ENCODE measurements at regions of chr3 and their contacts with region 1.

Region 1: GRCh38 chr3:32816439-32817256 is 1.1 kb upstream of the TRIM71 start:
- DNase-seq: peak; percentile 32
- H3K4me3 Mint-ChIP-seq: peak overlapping the region; percentile 62
- H3K27ac Mint-ChIP-seq: no peak overlapping the region
- H3K4me1 Mint-ChIP-seq: peaks cover 25% of the 10 kb centered on the region
- H3K27me3 Mint-ChIP-seq: peaks cover 46% of the 10 kb centered on the region

Region 2: DNA sequence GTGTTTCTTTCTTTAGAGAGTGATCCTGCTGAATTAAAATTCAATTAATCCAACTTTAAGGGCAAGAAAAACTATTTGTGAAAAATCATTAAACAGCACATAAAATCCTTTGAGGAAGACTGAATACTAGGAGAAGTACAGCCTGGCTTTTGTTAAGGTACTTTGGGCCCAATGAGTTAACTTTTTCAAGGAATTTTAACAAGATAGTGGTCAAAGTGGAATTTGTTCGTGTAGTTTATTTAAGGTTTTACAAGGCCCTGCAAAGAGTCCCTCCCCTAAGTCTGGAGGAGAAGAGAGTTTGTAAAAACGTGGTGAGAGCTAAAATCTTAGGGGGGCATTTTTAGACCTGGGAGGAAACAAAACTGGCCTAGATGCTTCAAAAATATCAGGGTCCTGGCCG is 24.8 kb before region 1 on chr3:
- CTCF ChIA-PET with region 1: no interaction called
- POLR2A ChIA-PET with region 1: no interaction called
- intact Hi-C with region 1: no loop called
- DNase-seq: no peak
- H3K4me3 Mint-ChIP-seq: no peak overlapping the region
- H3K27ac Mint-ChIP-seq: no peak overlapping the region
- H3K4me1 Mint-ChIP-seq: no peaks in the 10 kb centered on the region
- H3K27me3 Mint-ChIP-seq: no peaks in the 10 kb centered on the region

Region 3: DNA sequence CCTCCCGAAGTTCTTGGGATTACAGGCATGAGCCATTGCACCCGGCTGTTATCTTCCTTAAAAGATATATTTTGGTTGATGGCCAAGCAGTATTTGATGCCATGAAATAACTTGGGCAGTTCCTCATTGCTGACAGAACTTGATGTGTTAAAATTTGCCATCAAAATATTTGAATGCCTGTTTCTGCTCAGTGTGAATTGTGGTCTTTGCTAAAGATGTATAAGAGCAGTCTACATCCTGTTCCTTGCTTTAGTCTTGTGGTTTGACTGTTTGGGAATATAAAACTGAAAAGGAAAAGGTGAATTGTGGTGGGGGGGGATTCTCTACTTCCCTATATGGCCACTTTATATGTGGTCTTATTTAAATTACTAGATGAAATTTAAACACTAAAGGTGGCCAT is 15.1 kb after region 1 on chr3:
- CTCF ChIA-PET with region 1: no interaction called
- POLR2A ChIA-PET with region 1: no interaction called
- intact Hi-C with region 1: no loop called
- DNase-seq: no peak
- H3K4me3 Mint-ChIP-seq: no peak overlapping the region
- H3K27ac Mint-ChIP-seq: no peak overlapping the region
- H3K4me1 Mint-ChIP-seq: no peaks in the 10 kb centered on the region
- H3K27me3 Mint-ChIP-seq: peaks cover 15% of the 10 kb centered on the region

Region 4: DNA sequence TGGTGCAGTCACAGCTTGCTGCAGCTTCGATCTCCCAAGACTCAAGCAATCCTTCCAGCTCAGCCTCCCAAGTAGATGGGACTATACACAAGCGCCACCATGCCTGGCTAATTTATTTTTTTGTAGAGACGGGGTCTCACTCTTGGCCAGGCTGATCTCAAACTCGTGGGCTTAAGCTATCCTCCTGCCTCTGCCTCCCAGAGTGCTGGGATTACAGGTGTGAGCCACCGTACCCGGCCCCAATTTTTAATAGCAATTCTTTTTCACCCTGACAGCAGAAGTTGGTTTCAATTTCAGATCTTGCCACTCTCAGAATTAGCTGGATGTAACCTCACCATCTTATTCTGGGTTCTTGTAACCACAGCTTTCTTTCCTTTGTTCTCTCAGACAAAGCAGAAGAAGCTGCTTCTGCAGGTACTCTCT is 66.0 kb after region 1 on chr3:
- CTCF ChIA-PET with region 1: no interaction called
- POLR2A ChIA-PET with region 1: no interaction called
- intact Hi-C with region 1: loop called (anchors 5 kb)
- DNase-seq: peak; percentile 39
- H3K4me3 Mint-ChIP-seq: no peak overlapping the region
- H3K27ac Mint-ChIP-seq: no peak overlapping the region
- H3K4me1 Mint-ChIP-seq: peaks cover 11% of the 10 kb centered on the region
- H3K27me3 Mint-ChIP-seq: peaks cover 23% of the 10 kb centered on the region